Endothelial cell of umbilical vein (primary cell): ENCODE measurements at regions of chr2 and their contacts with region 1.

Region 1: DNA sequence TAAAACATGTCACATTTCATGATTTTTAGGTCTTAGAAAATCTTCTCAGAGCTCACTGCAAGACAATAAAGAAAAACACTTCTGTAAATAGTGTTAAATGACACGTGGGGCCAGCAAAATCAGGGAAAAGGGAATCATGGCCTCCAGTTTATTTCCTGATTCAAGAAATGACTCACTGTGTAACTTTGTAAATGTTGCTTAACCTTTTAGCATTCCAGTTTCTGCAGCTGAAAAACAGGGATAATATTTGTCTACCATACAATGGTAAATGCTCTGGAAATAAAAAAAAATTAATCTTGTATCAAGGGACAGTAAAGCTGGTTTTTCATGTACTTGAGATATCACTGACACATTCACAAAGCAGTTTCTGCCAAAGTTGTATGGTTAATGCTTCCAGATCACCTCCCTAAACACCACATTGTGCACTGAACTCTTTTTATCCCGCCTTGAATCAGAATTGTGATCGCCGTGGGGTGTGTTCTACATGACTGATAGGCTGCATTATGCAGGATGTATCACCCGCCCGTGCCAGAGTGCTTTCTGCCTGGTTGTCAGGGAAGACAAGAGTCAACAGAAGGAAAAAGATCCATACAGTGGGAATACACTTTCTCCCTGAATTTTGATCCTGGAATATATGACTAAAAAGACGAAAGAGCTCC is 238.8 kb downstream of the IKZF2 start:
- DNase-seq: peak; percentile 87
- H3K4me3 ChIP-seq: peak overlapping the region in 1 of 3 experiments; percentile 41
- H3K27ac ChIP-seq: peak overlapping the region; percentile 73
- H3K4me1 ChIP-seq: peaks cover 16% of the 10 kb centered on the region
- H3K27me3 ChIP-seq: no peaks in the 10 kb centered on the region
- CTCF ChIP-seq: no peak
- POLR2A ChIP-seq: no peak

Region 2: DNA sequence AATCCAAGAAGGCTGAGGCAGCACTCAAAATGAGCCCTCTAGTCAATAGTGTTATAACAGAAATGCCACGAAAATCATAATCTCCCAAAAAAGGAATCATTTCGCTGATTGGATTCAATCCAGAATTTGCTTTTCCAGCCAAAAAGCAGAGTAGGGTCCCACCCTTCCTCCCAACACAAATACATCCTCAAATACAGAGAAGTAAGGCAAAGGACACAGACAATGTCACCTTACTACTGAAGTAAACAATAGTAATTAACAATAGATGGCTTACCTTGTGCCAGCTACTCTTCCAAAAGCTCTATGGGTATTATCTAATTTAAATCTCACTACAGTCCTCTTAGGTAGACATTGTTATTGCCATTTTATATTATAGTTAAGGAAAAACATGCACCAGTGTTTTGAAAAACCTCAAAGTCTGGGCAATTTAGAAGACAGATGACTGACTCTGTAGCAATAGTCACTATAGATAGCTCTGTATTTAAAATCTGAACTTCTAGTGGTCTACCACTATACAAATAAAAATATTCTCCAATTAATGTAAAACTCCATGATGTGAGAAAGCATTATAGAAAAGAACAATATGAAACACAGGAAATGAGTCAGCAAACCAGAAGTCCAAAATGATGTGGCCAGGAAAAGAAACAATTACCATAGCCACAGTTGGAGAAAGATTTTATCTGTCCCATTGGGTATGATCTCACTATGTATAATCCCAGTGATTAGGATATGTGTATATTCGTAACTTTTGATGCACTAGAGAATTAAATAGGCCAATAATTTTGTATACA is 69.0 kb before region 1 on chr2:
- CTCF ChIA-PET with region 1: interaction called, 4 read pairs
- POLR2A ChIA-PET with region 1: no interaction called
- dilution Hi-C with region 1: no loop called
- intact Hi-C with region 1: loop called (anchors 1 kb)
- DNase-seq: peak; percentile 90
- H3K4me3 ChIP-seq: no peak overlapping the region
- H3K27ac ChIP-seq: peak overlapping the region; percentile 96
- H3K4me1 ChIP-seq: peaks cover 21% of the 10 kb centered on the region
- H3K27me3 ChIP-seq: no peaks in the 10 kb centered on the region
- CTCF ChIP-seq: no peak
- POLR2A ChIP-seq: no peak

Region 3: GRCh38 chr2:212939777-212940516 is 27.4 kb after region 1 on chr2:
- CTCF ChIA-PET with region 1: no interaction called
- POLR2A ChIA-PET with region 1: no interaction called
- dilution Hi-C with region 1: no loop called
- intact Hi-C with region 1: loop called (anchors 1 kb)
- DNase-seq: no peak
- H3K4me3 ChIP-seq: no peak overlapping the region
- H3K27ac ChIP-seq: no peak overlapping the region
- H3K4me1 ChIP-seq: no peaks in the 10 kb centered on the region
- H3K27me3 ChIP-seq: no peaks in the 10 kb centered on the region
- CTCF ChIP-seq: no peak
- POLR2A ChIP-seq: no peak